WTC11 (cell line): ENCODE measurements at regions of chr2 and their contacts with region 1.

Region 1: GRCh38 chr2:96536445-96537065 is at the start of gene ARID5A:
- DNase-seq: peak; percentile 96
- ATAC-seq: peak; percentile 76
- H3K4me3 Mint-ChIP-seq: peak within 1 kb of the TSS; percentile 82
- H3K27ac Mint-ChIP-seq: no peak within 1 kb of the TSS
- H3K4me1 Mint-ChIP-seq: peaks cover 58% of the 10 kb centered on the region
- H3K27me3 Mint-ChIP-seq: peaks cover 19% of the 10 kb centered on the region
- CTCF ChIP-seq: no peak
- total RNA-seq, gene ARID5A: 8.5 to 13.9 TPM (median 10.1 TPM) in 3 replicates

Region 2: GRCh38 chr2:96547751-96548161 is 11.2 kb after region 1 on chr2:
- CTCF ChIA-PET with region 1: interaction called, 117 read pairs
- POLR2A ChIA-PET with region 1: interaction called, 9 read pairs
- DNase-seq: no peak
- ATAC-seq: peak; percentile 56
- H3K4me3 Mint-ChIP-seq: peak overlapping the region; percentile 55
- H3K27ac Mint-ChIP-seq: peak overlapping the region; percentile 63
- H3K4me1 Mint-ChIP-seq: peaks cover 21% of the 10 kb centered on the region
- H3K27me3 Mint-ChIP-seq: no peaks in the 10 kb centered on the region; the same call in 1 of the 2 replicates
- CTCF ChIP-seq: no peak

Region 3: DNA sequence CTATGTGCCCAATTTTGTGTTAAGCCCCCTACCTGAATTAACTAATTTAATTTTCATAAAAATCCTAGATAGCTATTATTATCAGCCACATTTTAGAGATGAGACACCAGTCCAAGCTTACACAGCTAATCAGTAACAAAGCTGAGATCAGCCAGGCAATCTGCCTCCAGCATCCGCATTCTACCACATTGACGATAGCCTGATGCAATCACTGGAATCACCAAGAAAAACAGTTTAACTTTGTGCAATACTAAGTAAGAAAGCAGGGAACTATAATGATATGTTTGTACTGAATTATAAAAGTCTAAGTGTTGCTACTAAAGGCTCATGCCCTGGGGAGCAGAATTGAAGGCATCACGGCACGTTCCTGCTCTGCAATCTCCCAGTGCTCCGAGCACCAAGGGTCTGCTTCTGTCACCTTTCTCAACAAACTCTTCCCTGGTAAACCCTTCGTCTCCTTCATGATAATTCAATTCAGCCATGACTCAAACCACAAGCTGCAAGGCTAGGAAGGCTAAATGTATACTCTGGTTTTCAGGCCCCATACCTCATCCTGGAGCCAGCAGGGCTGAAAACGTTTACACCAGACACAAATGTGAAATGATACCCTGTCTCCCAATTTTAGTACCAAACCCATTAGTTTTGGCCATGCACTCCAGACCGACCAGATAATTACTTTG is 82.2 kb after region 1 on chr2:
- CTCF ChIA-PET with region 1: no interaction called
- POLR2A ChIA-PET with region 1: no interaction called
- DNase-seq: no peak
- ATAC-seq: no peak
- H3K4me3 Mint-ChIP-seq: no peak overlapping the region
- H3K27ac Mint-ChIP-seq: no peak overlapping the region
- H3K4me1 Mint-ChIP-seq: no peaks in the 10 kb centered on the region
- H3K27me3 Mint-ChIP-seq: no peaks in the 10 kb centered on the region
- CTCF ChIP-seq: no peak